A673 (cell line): ENCODE measurements at regions of chr5 and their contacts with region 1.

Region 1: GRCh38 chr5:150458819-150459557 is 9.4 kb upstream of the RPS14 start:
- DNase-seq: peak; percentile 86
- H3K4me3 ChIP-seq: peak overlapping the region; percentile 27
- H3K27ac ChIP-seq: no peak overlapping the region
- H3K4me1 ChIP-seq: no peaks in the 10 kb centered on the region
- H3K27me3 ChIP-seq: no peaks in the 10 kb centered on the region
- CTCF ChIP-seq: peak; percentile 74

Region 2: GRCh38 chr5:150523472-150524350 is 64.7 kb after region 1 on chr5:
- CTCF ChIA-PET with region 1: no interaction called
- POLR2A ChIA-PET with region 1: no interaction called
- intact Hi-C with region 1: loop called (anchors 1 kb)
- DNase-seq: peak; percentile 72
- H3K4me3 ChIP-seq: no peak overlapping the region
- H3K27ac ChIP-seq: no peak overlapping the region
- H3K4me1 ChIP-seq: no peaks in the 10 kb centered on the region
- H3K27me3 ChIP-seq: no peaks in the 10 kb centered on the region
- CTCF ChIP-seq: peak; percentile 67

Region 3: DNA sequence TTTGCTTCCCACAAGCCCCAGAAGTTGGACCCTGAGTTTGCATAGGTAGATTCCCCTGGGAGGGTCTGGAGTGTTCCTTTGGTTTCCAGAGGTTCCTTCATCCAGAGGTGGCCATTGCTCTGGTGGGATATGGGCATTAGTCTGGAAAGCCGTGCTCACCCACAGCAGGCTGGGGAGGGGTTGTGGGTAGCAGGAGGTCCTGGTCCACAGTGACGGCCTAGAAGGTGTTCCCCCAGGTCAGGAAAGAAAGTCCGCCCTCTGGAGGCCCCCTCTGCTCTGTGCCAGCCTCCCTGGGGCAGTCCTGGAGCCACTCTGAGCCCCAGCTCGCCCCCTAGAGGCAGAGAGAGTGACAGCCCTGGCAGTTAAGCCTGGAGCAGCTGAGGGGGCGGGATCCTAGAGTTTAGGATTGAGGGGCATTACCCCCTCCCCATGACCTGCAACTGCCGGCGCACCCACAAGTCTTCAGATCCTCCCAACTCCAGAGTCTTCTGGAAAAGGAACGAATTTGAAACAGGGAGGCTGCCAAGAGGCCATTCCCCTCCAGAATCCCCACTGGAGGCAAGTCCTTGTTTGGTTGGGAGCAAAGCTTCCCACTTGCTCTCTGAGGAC is 85.7 kb after region 1 on chr5:
- CTCF ChIA-PET with region 1: interaction called, 4 read pairs
- POLR2A ChIA-PET with region 1: no interaction called
- intact Hi-C with region 1: loop called (anchors 2 kb)
- DNase-seq: peak; percentile 81
- H3K4me3 ChIP-seq: no peak overlapping the region
- H3K27ac ChIP-seq: no peak overlapping the region
- H3K4me1 ChIP-seq: no peaks in the 10 kb centered on the region
- H3K27me3 ChIP-seq: no peaks in the 10 kb centered on the region
- CTCF ChIP-seq: peak; percentile 96

Region 4: GRCh38 chr5:150846654-150847333 is 387.8 kb after region 1 on chr5:
- CTCF ChIA-PET with region 1: no interaction called
- POLR2A ChIA-PET with region 1: no interaction called
- intact Hi-C with region 1: loop called (anchors 5 kb)
- DNase-seq: peak; percentile 87
- H3K4me3 ChIP-seq: no peak overlapping the region
- H3K27ac ChIP-seq: no peak overlapping the region
- H3K4me1 ChIP-seq: no peaks in the 10 kb centered on the region
- H3K27me3 ChIP-seq: no peaks in the 10 kb centered on the region
- CTCF ChIP-seq: peak; percentile 83